BJ (cell line): ENCODE measurements at regions of chr22 and their contacts with region 1.

Region 1: DNA sequence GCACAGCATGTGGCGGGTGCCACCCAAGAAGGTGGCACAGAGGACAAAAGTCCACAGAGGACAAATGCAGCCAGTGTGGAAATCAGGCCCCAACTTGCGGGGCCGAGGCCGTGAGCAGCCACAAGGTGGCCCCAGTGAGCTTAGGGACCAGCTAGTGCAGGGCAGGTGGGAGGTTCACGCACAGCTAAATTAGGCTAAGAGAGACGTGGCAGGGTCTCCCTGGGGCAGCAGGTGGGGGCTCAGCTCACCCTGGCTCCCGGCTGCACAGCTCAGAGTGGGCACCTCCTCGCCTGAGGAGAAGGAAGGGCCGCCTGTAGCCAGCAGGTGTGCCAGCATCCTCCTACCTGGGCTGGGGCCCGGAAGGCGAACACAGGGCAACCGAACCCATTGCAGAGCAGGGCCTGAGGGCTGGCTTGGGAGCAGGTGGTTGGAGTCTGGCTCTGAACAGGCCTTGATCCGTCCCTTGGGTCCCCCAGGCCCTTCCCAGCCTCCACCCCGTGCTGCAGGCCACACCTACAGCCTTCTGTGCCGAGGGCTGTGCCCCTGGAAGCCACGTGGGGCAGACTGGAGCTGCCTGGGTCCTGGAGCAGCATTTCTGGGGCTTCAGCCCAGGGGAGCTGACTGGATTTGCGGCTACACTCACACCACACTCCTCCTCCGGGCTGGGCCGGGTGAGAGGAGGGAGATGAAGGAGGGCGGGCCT is 26.1 kb upstream of the CELSR1 start:
- DNase-seq: no peak
- H3K4me3 ChIP-seq: no peak overlapping the region
- H3K27me3 ChIP-seq: no peaks in the 10 kb centered on the region
- CTCF ChIP-seq: peak; percentile 81

Region 2: GRCh38 chr22:46377566-46378425 is 185.7 kb before region 1 on chr22:
- CTCF ChIA-PET with region 1: no interaction called
- POLR2A ChIA-PET with region 1: no interaction called
- DNase-seq: no peak
- H3K4me3 ChIP-seq: no peak overlapping the region
- H3K27me3 ChIP-seq: no peaks in the 10 kb centered on the region
- CTCF ChIP-seq: no peak

Region 3: GRCh38 chr22:46547883-46548244 is 15.7 kb before region 1 on chr22:
- CTCF ChIA-PET with region 1: interaction called, 13 read pairs
- POLR2A ChIA-PET with region 1: no interaction called
- DNase-seq: peak; percentile 81
- H3K4me3 ChIP-seq: no peak overlapping the region
- H3K27me3 ChIP-seq: no peaks in the 10 kb centered on the region
- CTCF ChIP-seq: no peak

Region 4: GRCh38 chr22:46553189-46553588 is 10.3 kb before region 1 on chr22:
- CTCF ChIA-PET with region 1: interaction called, 13 read pairs
- POLR2A ChIA-PET with region 1: no interaction called
- DNase-seq: no peak
- H3K4me3 ChIP-seq: no peak overlapping the region
- H3K27me3 ChIP-seq: no peaks in the 10 kb centered on the region; the same call in none of the 2 replicates
- CTCF ChIP-seq: no peak

Region 5: DNA sequence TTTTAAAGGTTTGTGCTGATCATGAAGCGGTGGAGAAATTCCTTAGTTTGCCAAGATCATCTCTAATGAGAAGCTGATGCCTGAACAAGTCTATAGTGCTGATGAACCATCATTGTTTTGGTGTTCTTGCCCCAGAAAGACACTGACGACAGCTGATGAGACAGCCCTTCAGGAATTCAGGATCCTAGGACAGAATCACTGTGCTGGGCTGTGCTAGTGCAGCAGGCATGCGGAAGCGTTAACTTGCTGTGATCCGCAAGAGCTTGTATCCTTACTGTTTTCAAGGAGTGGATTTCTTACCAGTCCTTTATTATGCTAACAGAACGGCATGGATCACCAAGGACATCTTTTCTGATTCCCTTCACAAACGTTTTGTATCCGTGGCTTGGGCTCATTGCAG is 303.1 kb after region 1 on chr22:
- CTCF ChIA-PET with region 1: no interaction called
- POLR2A ChIA-PET with region 1: no interaction called
- DNase-seq: no peak
- H3K4me3 ChIP-seq: no peak overlapping the region
- H3K27me3 ChIP-seq: no peaks in the 10 kb centered on the region
- CTCF ChIP-seq: no peak